ENCODE measurements at regions of chr5 and their contacts with region 1.

Region 1: DNA sequence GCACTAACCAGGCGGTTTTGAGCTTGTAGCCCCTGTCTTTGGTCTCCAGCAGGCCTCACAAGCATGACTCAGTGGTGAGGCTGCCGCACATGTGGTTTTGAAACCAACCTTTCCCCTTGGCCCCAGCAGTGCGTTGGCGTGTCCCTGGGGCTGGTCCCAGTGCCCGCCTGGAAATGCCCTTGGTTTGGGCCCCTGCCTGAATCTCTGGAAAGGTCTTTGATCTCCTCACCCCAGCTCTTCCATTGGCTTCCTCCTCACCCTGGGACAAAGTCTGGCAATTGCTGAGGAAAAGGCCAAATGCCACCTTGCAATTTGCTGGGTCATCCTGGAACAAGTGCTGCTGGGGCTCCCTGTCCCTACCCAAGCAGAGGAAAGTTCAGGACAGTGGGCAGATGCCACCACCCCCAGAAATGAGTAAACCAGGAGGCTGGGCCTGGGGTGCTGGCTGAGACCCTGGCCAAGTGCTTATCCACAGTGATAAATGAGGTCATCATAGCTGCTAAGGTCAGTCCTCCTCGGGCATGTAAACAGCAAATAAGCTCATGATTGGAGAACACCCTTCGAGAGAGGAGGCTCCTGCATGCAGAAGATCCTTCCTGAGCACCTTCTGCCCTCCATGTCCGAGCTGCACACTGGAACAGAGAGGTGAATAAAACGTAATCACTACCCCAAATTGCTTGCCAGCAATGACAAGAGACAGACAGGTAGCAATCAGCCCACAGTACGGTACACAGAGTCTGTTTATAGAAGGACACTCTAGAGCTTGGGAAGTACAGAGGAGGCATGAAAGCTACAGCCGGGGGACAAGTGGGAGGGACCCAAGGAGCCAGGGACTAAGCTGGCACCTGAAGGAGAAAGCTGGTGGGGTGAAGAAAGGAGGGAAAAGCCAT is 98.9 kb upstream of the CPEB4 start:
- DNase-seq: peak; percentile 98
- H3K4me3 Mint-ChIP-seq: no peak overlapping the region
- H3K27ac Mint-ChIP-seq: peak overlapping the region; percentile 77
- H3K4me1 Mint-ChIP-seq: peaks cover 53% of the 10 kb centered on the region
- H3K27me3 Mint-ChIP-seq: no peaks in the 10 kb centered on the region
- CTCF ChIP-seq: no peak

Region 2: DNA sequence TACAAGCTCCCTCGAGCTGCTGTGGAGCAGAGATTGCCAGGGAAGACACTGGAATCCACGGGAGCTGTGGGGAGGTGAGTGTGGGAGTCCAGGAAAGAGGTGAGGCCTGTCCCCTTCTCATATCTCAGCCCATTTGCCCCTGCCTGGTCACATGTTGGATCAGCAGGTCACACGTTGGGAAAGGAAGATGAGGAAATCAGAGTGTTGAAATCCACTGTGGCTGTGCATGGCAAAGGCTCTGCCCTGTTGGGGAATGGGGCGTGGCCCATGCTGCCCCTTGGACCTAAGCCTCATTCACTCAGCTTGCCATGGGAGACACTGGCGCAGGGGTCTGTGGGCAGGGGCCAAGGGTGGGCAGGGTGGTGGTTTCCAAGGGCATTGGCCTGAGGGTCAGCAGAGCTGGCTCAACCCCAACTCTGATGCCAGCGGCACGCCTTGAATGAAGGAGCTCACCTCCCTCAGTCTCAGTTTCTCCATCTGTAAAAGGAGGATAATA is 13.4 kb after region 1 on chr5:
- CTCF ChIA-PET with region 1: interaction called, 5 read pairs
- POLR2A ChIA-PET with region 1: interaction called, 21 read pairs
- intact Hi-C with region 1: no loop called
- DNase-seq: peak; percentile 99
- H3K4me3 Mint-ChIP-seq: no peak overlapping the region
- H3K27ac Mint-ChIP-seq: peak overlapping the region; percentile 80
- H3K4me1 Mint-ChIP-seq: peaks cover 44% of the 10 kb centered on the region
- H3K27me3 Mint-ChIP-seq: no peaks in the 10 kb centered on the region
- CTCF ChIP-seq: no peak

Measured in MCF 10A (cell line).